Sciatic nerve (tissue), 2 donors: ENCODE measurements at regions of chr9 and their contacts with region 1.

Region 1: GRCh38 chr9:34671307-34671706 is 8.8 kb upstream of the CCL27 start:
- DNase-seq: no peak
- ATAC-seq: no peak

Region 2: DNA sequence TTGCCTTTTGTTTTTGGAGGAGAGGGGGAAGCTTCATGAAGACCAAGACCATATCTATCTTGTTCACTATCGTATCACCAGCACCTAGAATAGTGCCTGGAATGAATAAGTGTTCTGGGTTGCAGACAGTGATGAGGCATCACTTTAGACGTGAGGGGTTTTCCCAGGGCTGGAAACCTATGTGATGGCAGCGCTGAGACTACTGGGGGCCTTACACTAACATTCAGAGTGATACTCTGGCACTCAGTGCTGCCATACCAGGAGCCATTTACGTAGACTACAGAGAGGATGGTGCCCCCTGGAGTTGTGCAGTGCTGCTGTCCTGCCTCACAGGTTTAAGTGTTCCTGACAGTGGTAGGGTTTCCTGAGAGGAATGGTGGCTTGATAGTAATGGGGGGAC is 12.8 kb after region 1 on chr9:
- intact Hi-C with region 1: loop called (anchors 2 kb)
- DNase-seq: no peak
- ATAC-seq: no peak